ENCODE measurements at regions of chr3 and their contacts with region 1.

Region 1: DNA sequence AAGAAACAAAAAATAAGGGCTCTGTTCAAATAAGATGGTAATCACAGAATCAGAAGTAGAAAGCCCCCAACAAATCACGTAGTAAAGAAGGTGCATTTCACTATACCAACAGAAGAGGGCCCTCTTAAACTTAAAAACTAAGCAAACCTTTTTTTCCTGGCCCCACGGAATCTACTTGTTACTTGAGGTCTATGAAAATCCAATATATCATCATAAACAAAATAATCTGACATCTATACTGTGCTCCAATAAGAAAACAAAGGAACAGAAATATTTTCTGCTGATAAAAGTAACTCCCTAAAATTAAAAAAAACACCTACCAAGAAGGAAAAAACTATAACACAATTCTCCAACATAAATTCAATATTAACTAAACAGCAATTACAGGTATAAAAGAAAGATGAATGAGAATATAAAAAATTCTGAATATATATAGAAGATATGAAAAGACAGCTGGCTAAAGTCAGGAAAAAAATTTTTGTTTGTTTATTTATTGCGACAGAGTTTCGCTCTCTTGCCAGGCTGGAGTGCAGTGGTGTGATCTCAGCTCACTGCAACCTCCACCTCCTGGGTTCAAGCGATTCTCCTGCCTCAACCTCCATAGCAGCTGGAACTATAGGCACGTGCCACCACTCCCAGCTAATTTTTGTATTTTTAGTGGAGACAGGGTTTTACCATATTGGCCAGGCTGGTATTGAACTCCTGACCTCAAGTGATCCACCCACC is 81.8 kb downstream of the CLASP2 start:
- DNase-seq: no peak
- H3K4me3 ChIP-seq: no peak overlapping the region
- H3K27ac ChIP-seq: no peak overlapping the region
- H3K4me1 ChIP-seq: no peaks in the 10 kb centered on the region
- H3K27me3 ChIP-seq: no peaks in the 10 kb centered on the region
- CTCF ChIP-seq: peak in 2 of 3 experiments; percentile 37 to 46

Region 2: GRCh38 chr3:33798411-33799201 is 162.3 kb after region 1 on chr3 and contains the start of gene PDCD6IP:
- dilution Hi-C with region 1: loop called (anchors 25 kb)
- DNase-seq: peak; percentile 71
- H3K4me3 ChIP-seq: peak within 1 kb of the TSS; percentile 91 to 100 (median 98)
- H3K27ac ChIP-seq: peak within 1 kb of the TSS; percentile 99
- H3K4me1 ChIP-seq: peaks cover 32% of the 10 kb centered on the region
- H3K27me3 ChIP-seq: no peaks in the 10 kb centered on the region
- CTCF ChIP-seq: peak in 1 of 3 experiments; percentile 21
- polyA plus RNA-seq, gene PDCD6IP: 79.6 to 183 TPM (median 138 TPM) in 3 replicates

Measured in keratinocyte (primary cell).